Dorsolateral prefrontal cortex (tissue), 120 donors: ENCODE measurements at regions of chr1 and their contacts with region 1.

Region 1: GRCh38 chr1:1435106-1435903 is at the start of gene VWA1:
- DNase-seq: peak in 8 of 10 donors; percentile 53 to 86 (median 72)
- H3K4me3 ChIP-seq: peak within 1 kb of the TSS; percentile 39 to 82 (median 67)
- H3K27ac ChIP-seq: peak within 1 kb of the TSS; percentile 78 to 100 (median 97)
- H3K27me3 ChIP-seq: no peaks in the 10 kb centered on the region
- CTCF ChIP-seq: peak in 1 of 56 donors; percentile 6
- total RNA-seq, gene VWA1: 27.4 to 258 (median 73.3) TPM

Region 2: DNA sequence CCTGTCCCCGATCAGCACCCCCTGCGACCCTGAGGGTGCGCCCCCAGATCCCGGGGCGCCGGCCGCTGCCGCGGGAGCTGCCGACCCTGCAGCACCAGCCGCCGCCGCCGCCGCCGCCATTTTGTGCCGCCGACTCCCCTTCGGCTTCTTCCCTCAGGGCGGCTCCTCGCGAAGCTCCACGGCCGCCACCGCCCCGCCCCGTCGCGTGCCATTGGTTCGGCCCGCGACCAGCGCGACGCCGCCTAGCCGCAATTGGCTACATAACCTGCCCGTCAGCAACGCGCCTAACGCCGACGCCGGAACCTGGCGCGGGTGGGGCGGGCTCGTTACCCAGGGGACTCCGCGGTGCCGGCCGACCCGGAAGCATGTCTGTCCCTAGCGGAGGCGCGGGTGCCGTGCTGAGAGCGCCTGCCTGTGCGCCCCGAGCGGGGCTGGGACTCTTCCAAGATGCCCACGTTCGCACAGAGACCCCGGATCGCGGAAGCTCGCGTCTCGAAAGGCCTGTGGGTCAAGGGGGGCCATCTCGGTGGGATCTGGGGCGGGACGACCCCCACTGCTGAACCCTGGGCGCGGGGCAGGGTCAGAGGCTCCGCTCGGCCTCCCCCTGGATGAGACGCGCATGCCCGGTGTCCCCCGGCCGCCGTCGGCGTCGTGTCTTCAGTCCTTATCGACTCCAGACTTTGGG is 36.0 kb before region 1 on chr1 and contains the start of gene CCNL2:
- intact Hi-C with region 1: loop called in 1 of 2 experiments (anchors 5 kb)
- DNase-seq: peak; percentile 96 to 99 (median 98)
- H3K4me3 ChIP-seq: peak within 1 kb of the TSS; percentile 78 to 100 (median 99)
- H3K27ac ChIP-seq: peak within 1 kb of the TSS; percentile 58 to 96 (median 90)
- H3K27me3 ChIP-seq: no peaks in the 10 kb centered on the region
- CTCF ChIP-seq: peak; percentile 23 to 80 (median 64)
- total RNA-seq, gene CCNL2: 111 to 235 (median 165) TPM